H1 (cell line): ENCODE measurements at regions of chr15 and their contacts with region 1.

Region 1: GRCh38 chr15:50192926-50193620 is 11.1 kb downstream of the SLC27A2 start:
- DNase-seq: no peak
- H3K4me3 ChIP-seq: no peak overlapping the region
- H3K27ac ChIP-seq: no peak overlapping the region
- H3K4me1 ChIP-seq: no peaks in the 10 kb centered on the region
- H3K27me3 ChIP-seq: no peaks in the 10 kb centered on the region
- CTCF ChIP-seq: no peak
- EP300 ChIP-seq: no peak
- POLR2A ChIP-seq: no peak
- RAD21 ChIP-seq: no peak

Region 2: GRCh38 chr15:50182219-50183013 is 10.7 kb before region 1 on chr15:
- CTCF ChIA-PET with region 1: interaction called, 10 read pairs
- POLR2A ChIA-PET with region 1: no interaction called
- DNase-seq: peak in 1 of 2 experiments; percentile 85
- H3K4me3 ChIP-seq: peak overlapping the region; percentile 51 to 66 (median 58)
- H3K27ac ChIP-seq: no peak overlapping the region
- H3K4me1 ChIP-seq: peaks cover 0 to 8% (median 4%) of the 10 kb centered on the region in 4 experiments; a peak in 6 of 7 replicates
- H3K27me3 ChIP-seq: peaks cover 3 to 33% (median 28%) of the 10 kb centered on the region in 4 experiments
- CTCF ChIP-seq: no peak
- EP300 ChIP-seq: no peak
- POLR2A ChIP-seq: no peak
- RAD21 ChIP-seq: no peak